Activated naive CD4-positive, alpha-beta T cell treated with anti-CD3 and anti-CD28 coated beads for 36 hours (primary cell): ENCODE measurements at regions of chr14 and their contacts with region 1.

Region 1: DNA sequence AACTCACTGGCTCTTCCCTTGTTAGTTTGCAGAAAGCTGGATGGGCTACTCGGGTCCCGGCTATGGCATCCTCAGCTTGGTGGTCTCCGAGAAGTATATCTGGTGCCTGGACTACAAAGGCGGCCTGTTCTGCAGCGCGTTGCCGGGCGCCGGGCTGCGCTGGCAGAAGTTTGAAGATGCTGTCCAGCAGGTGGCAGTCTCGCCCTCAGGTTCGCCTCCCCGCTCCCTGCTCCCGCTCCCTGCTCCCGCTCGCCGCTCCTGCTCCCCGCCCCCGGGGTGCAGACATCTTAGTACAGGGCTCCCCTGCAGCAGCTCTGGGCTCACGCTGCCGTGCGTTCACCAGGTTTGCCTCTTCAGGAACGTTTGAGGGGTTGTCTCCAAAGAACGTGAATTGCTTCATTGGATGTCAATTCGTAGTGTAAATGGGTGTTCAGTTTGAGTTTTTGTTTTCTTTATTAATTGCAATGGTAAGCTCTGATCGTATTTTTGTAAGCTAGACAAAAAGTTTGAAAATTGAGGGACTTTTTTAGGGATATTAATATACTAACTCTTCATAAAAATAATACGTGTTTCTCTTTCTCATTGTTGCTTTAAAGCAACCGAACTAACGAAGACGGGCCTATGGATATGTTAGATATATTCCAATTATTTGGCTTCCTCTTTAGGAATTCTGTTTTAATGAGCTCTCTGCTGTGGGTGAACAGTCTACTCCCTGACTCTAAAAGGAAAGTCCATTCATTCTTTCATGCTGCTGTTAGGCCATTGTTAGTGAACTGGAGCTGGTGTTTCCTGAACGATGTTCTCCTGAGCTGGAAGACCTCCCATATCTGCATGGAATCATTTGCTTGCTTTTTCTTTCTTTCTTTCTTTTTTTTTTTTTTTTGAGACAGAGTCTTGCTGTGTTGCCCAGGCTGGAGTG is 71.3 kb downstream of the ANKRD9 start:
- DNase-seq: peak; percentile 71
- H3K4me3 Mint-ChIP-seq: peak overlapping the region; percentile 39
- H3K27ac Mint-ChIP-seq: no peak overlapping the region
- H3K4me1 Mint-ChIP-seq: peaks cover 4% of the 10 kb centered on the region
- H3K27me3 Mint-ChIP-seq: no peaks in the 10 kb centered on the region

Region 2: GRCh38 chr14:102403028-102403427 is 35.2 kb before region 1 on chr14:
- CTCF ChIA-PET with region 1: no interaction called
- intact Hi-C with region 1: no loop called
- DNase-seq: no peak
- H3K4me3 Mint-ChIP-seq: no peak overlapping the region
- H3K27ac Mint-ChIP-seq: no peak overlapping the region
- H3K4me1 Mint-ChIP-seq: no peaks in the 10 kb centered on the region
- H3K27me3 Mint-ChIP-seq: no peaks in the 10 kb centered on the region

Region 3: GRCh38 chr14:102421411-102422053 is 16.7 kb before region 1 on chr14:
- CTCF ChIA-PET with region 1: interaction called, 13 read pairs
- intact Hi-C with region 1: no loop called
- DNase-seq: no peak
- H3K4me3 Mint-ChIP-seq: no peak overlapping the region
- H3K27ac Mint-ChIP-seq: no peak overlapping the region
- H3K4me1 Mint-ChIP-seq: no peaks in the 10 kb centered on the region
- H3K27me3 Mint-ChIP-seq: no peaks in the 10 kb centered on the region

Region 4: DNA sequence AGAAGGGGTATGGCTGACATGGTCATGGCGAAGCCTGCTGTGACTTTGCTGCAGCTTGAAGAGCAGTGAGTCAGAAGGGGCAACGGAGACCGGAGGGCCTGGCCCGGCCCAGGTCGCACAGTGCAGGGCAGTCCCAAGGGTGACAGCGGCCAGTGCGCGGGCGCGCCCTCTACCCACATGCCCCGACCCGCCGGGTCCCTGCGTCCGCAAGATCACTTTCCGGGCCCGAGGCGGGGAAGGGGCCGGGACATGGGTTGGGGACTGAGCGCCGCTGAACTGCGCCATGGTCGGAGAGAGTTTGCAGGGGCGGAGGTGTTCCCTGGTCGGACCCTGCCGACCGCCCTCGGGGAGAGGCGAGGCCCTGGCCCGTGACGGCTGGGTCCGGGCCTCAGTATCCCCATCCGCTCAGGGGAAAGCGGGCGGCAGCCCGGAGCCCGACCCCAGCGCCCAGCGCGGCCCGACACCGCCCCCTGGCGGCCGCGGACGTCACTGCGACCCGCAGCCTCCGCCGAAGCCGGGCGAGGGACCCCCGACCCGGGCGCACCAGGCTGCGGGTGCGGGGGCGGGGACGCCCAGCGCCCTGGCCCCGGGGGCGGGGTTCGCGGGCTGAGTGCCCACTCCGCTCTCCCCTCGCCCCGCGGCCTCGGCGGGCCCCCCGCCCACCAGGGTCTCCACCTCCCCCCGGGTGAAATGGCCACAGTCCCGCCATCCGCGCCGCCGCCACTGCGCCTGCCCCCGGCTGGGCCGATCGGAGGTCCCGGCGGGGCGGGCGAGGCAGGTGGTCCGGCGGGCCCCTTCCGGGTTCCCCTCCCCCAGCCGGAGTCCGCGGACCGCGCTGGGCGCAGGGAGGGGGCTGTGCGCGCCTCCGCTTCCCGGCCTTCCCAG is 78.5 kb after region 1 on chr14:
- CTCF ChIA-PET with region 1: interaction called, 31 read pairs
- intact Hi-C with region 1: loop called (anchors 1 kb)
- DNase-seq: peak; percentile 48
- H3K4me3 Mint-ChIP-seq: peak overlapping the region; percentile 70
- H3K27ac Mint-ChIP-seq: no peak overlapping the region
- H3K4me1 Mint-ChIP-seq: peaks cover 5% of the 10 kb centered on the region
- H3K27me3 Mint-ChIP-seq: peaks cover 3% of the 10 kb centered on the region

Region 5: DNA sequence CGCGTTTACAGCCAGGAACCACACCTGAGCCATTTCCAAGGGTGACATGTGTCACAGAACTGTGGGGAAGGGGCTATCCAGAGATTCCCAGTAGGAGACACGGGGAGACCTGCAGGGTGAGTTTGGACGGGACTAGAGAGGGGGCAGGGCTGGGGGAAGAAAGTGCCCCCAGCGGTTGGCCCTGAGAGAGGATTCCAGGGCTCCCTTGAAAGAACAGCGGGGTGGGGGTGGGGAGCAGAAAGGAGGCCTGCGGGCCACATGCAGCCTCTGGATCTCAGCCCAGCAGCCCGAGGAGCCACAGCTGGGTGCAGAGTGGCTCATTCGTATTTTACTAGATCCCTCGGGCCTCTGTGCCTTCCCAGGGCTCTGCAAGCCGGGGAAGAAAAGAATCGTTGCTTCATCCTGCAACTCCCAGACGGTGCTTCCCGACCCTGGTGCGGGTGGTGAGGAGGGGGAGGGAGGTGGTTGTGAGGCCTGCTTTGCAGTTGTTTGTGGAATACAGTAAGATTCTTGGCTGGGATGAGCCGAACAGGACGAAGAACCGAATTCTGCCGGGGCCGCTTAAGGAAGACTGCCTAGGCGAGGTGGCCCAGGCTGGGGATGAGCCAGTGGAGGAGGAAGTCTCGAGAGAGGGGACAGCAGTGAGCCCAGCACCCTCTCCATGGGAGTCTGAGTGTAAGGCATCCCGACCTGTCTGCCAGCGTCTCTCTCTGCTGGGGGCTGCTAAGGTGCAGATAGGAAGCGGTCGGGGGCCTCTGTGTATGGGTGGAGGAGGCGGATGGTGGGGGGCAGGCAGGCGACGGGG is 107.4 kb after region 1 on chr14:
- CTCF ChIA-PET with region 1: no interaction called
- intact Hi-C with region 1: no loop called
- DNase-seq: no peak
- H3K4me3 Mint-ChIP-seq: peak overlapping the region; percentile 42
- H3K27ac Mint-ChIP-seq: no peak overlapping the region
- H3K4me1 Mint-ChIP-seq: peaks cover 3% of the 10 kb centered on the region
- H3K27me3 Mint-ChIP-seq: peaks cover 30% of the 10 kb centered on the region

Region 6: DNA sequence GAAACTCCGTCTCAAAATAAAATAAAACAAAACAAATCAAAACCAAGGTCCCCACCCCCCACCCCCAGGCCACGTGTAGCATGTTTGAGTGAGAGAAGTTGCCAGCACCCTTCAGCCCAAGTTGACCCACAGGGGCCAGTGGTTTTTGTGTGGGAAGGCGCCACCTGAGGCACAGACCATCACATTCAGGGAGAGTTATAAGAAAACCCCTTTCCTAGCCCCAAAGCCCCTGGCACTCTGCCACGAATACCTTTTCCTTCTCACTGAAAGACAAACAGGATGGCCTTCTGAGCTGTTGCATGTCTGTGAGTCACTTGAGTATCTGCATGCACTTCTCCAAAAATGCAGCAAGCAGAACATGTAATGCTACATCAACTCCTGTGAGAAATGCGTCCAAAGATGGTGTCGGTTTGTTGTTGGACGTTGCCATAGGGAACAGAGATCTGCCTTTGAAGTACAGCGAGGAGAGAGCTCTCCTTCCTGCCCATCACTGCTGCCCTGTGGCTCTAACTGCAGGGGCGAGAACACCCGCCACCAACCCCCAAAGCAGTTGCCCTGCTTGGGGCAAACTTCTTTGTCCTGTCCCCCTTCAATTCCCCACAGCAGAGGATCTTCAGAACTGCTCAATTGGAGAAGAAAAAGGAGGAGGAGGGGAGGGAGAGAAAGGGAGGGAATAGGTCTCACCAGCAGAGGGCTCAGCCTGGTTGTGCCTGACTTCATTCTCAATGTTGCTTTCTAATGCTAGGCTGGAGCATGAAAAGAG is 336.3 kb after region 1 on chr14:
- CTCF ChIA-PET with region 1: no interaction called
- intact Hi-C with region 1: no loop called
- DNase-seq: peak; percentile 81
- H3K4me3 Mint-ChIP-seq: peak overlapping the region; percentile 41
- H3K27ac Mint-ChIP-seq: peak overlapping the region; percentile 86
- H3K4me1 Mint-ChIP-seq: peaks cover 31% of the 10 kb centered on the region
- H3K27me3 Mint-ChIP-seq: no peaks in the 10 kb centered on the region